Transverse colon (tissue), 4 donors: ENCODE measurements at regions of chr2 and their contacts with region 1.

Region 1: DNA sequence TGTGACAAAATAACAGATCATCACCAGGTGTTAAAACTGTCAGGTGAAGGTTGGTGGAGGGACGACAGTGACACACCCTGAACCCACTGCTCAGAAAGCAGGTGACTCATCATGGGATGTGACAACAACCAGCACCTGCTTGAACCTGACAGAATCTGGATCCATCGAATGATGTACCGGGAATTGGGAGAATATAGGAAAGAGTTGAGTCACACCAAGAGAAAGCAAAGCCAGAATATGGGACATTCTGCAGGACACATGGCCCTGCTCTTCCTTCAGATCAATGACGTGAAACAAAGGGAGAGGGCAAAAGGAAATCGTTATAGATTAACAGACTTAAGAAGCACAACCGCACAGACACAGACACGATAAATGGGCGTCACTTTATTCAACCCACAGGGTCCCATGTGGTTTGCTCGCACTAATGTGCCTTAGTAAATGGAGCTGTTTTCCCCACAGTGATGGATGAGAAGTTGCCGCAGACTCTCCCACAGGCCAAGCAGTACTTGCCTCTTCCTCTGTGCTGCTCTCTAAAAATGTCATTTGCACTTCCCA is 100.1 kb downstream of the CRACDL start:
- DNase-seq: no peak
- H3K4me3 ChIP-seq: no peak overlapping the region
- H3K27ac ChIP-seq: no peak overlapping the region
- H3K4me1 ChIP-seq: peaks cover 0 to 7% (median 0%) of the 10 kb centered on the region in 4 donors
- H3K27me3 ChIP-seq: no peaks in the 10 kb centered on the region
- CTCF ChIP-seq: no peak
- EP300 ChIP-seq: no peak
- POLR2A ChIP-seq: no peak

Region 2: GRCh38 chr2:98212092-98212797 is 623.7 kb before region 1 on chr2:
- in situ Hi-C with region 1: no loop called
- intact Hi-C with region 1: no loop called
- DNase-seq: no peak
- H3K4me3 ChIP-seq: no peak overlapping the region
- H3K27ac ChIP-seq: peak overlapping the region in 3 of 4 donors; percentile 30 to 61 (median 36)
- H3K4me1 ChIP-seq: peaks cover 0 to 11% (median 4%) of the 10 kb centered on the region in 4 donors
- H3K27me3 ChIP-seq: no peaks in the 10 kb centered on the region
- CTCF ChIP-seq: no peak
- EP300 ChIP-seq: no peak
- POLR2A ChIP-seq: no peak

Region 3: GRCh38 chr2:98649135-98649991 is 186.5 kb before region 1 on chr2:
- in situ Hi-C with region 1: loop called (anchors 5 to 10 kb)
- intact Hi-C with region 1: loop called (anchors 5 kb)
- DNase-seq: peak; percentile 87
- H3K4me3 ChIP-seq: no peak overlapping the region
- H3K27ac ChIP-seq: peak overlapping the region in 3 of 4 donors; percentile 16 to 75 (median 52)
- H3K4me1 ChIP-seq: peaks cover 0 to 40% (median 15%) of the 10 kb centered on the region in 4 donors
- H3K27me3 ChIP-seq: no peaks in the 10 kb centered on the region
- CTCF ChIP-seq: peak; percentile 96 to 99 (median 98)
- EP300 ChIP-seq: no peak
- POLR2A ChIP-seq: no peak

Region 4: DNA sequence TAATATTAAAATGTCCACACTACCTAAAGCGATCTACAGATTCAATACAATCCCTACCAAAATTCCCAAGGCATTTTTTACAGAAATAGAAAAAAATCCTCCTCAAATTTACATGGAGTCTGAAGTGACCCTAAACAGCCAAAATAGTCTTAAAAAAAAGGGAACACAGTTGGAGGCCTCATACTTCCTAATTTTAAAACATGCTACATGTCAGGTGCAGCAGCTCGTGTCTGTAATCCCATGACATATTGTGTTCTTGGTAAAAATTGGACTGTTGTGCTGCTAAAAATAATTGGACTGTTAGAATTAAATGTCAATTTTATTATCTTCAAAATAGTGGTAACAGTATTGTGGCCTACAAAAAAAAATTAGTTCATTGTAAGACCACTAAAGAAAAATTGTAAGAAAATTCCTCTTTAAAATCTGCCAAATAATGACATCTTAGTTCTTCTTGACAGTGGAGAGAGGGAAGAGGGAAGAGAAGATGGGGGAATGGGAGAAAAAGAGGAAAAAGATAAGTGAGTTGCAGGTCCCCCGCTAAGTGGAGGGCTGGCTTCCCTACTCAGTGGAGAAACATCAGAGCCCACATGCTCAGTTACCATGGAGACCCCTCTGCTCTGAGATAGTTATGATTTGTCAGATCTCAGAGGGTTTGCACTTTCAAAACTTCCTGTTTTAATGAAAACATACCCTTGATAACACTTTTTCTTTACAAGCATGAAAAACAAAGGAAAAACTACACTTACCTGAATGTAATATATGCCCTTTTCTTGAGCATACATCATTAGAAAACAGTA is 181.0 kb before region 1 on chr2:
- in situ Hi-C with region 1: loop called in 2 of 4 experiments (anchors 5 kb)
- intact Hi-C with region 1: no loop called
- DNase-seq: no peak
- H3K4me3 ChIP-seq: no peak overlapping the region
- H3K27ac ChIP-seq: peak overlapping the region in 3 of 4 donors; percentile 4 to 36 (median 26)
- H3K4me1 ChIP-seq: peaks cover 0 to 34% (median 10%) of the 10 kb centered on the region in 4 donors
- H3K27me3 ChIP-seq: no peaks in the 10 kb centered on the region
- CTCF ChIP-seq: no peak
- EP300 ChIP-seq: no peak
- POLR2A ChIP-seq: no peak